ENCODE measurements at regions of chr9 and their contacts with region 1.

Region 1: DNA sequence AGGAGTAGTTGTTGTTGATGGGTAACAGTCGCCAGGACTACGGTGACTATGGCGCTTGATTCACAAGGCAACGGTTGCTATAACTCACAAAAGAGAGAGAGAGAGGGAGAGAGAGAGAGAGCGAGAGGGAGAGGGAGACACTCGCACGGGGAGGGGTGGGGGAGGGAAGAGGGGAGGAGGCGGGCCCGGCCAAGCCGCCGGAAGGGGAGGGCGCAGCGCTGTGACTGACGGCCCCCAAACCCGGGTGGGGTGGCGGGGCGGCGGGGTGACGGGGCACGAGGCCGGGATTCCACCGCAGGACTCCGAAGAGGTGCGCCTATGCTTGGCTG is at the start of gene RFX3:
- DNase-seq: peak; percentile 96
- ATAC-seq: peak; percentile 63
- H3K4me3 Mint-ChIP-seq: peak within 1 kb of the TSS; percentile 89
- H3K27ac Mint-ChIP-seq: peak within 1 kb of the TSS; percentile 99
- H3K4me1 Mint-ChIP-seq: peaks cover 39% of the 10 kb centered on the region
- H3K27me3 Mint-ChIP-seq: no peaks in the 10 kb centered on the region
- total RNA-seq, gene RFX3: 12.5 to 16.6 TPM

Region 2: GRCh38 chr9:2837915-2838314 is 687.9 kb before region 1 on chr9:
- CTCF ChIA-PET with region 1: interaction called, 3 read pairs
- POLR2A ChIA-PET with region 1: no interaction called
- intact Hi-C with region 1: loop called in 1 of 2 experiments (anchors 5 kb)
- DNase-seq: no peak
- ATAC-seq: no peak
- H3K4me3 Mint-ChIP-seq: no peak overlapping the region
- H3K27ac Mint-ChIP-seq: peak overlapping the region; percentile 77
- H3K4me1 Mint-ChIP-seq: peaks cover 15% of the 10 kb centered on the region
- H3K27me3 Mint-ChIP-seq: no peaks in the 10 kb centered on the region

Region 3: GRCh38 chr9:3299872-3300271 is 225.9 kb before region 1 on chr9:
- CTCF ChIA-PET with region 1: no interaction called
- POLR2A ChIA-PET with region 1: no interaction called
- intact Hi-C with region 1: no loop called
- DNase-seq: no peak
- ATAC-seq: no peak
- H3K4me3 Mint-ChIP-seq: no peak overlapping the region
- H3K27ac Mint-ChIP-seq: no peak overlapping the region
- H3K4me1 Mint-ChIP-seq: peaks cover 10% of the 10 kb centered on the region
- H3K27me3 Mint-ChIP-seq: no peaks in the 10 kb centered on the region

Region 4: DNA sequence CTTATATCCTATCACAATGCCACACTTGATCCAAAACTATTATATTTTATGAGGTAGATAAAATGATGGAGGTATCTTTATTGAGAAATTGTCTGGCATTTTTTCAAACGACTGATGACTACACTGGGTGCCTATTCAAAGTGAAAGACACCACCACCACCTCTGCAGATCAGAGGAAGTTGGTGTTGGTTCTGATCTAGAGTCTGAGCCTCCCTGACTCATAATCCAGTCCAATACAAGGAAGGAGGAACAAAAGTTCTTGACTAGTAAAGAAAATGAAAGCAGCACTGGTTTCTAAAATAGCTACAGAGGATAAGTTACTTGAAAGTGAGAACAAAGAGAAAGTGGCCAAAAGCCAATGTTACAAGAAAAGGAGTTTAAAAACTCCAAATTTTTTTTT is 139.9 kb before region 1 on chr9:
- CTCF ChIA-PET with region 1: no interaction called
- POLR2A ChIA-PET with region 1: interaction called, 4 read pairs
- intact Hi-C with region 1: loop called (anchors 2 to 5 kb)
- DNase-seq: peak; percentile 65
- ATAC-seq: peak; percentile 100
- H3K4me3 Mint-ChIP-seq: no peak overlapping the region
- H3K27ac Mint-ChIP-seq: no peak overlapping the region
- H3K4me1 Mint-ChIP-seq: peaks cover 36% of the 10 kb centered on the region
- H3K27me3 Mint-ChIP-seq: no peaks in the 10 kb centered on the region

Region 5: GRCh38 chr9:3498691-3499090 is 27.1 kb before region 1 on chr9:
- CTCF ChIA-PET with region 1: no interaction called
- POLR2A ChIA-PET with region 1: no interaction called
- intact Hi-C with region 1: no loop called
- DNase-seq: no peak
- ATAC-seq: no peak
- H3K4me3 Mint-ChIP-seq: no peak overlapping the region
- H3K27ac Mint-ChIP-seq: no peak overlapping the region
- H3K4me1 Mint-ChIP-seq: peaks cover 31% of the 10 kb centered on the region
- H3K27me3 Mint-ChIP-seq: no peaks in the 10 kb centered on the region

Region 6: GRCh38 chr9:3508521-3509291 is 17.1 kb before region 1 on chr9:
- CTCF ChIA-PET with region 1: interaction called, 5 read pairs
- POLR2A ChIA-PET with region 1: interaction called, 6 read pairs
- intact Hi-C with region 1: loop called (anchors 1 kb)
- DNase-seq: no peak
- ATAC-seq: peak; percentile 48
- H3K4me3 Mint-ChIP-seq: peak overlapping the region; percentile 41
- H3K27ac Mint-ChIP-seq: peak overlapping the region; percentile 86
- H3K4me1 Mint-ChIP-seq: peaks cover 51% of the 10 kb centered on the region
- H3K27me3 Mint-ChIP-seq: no peaks in the 10 kb centered on the region

Region 7: GRCh38 chr9:4297151-4297785 is 771.5 kb after region 1 on chr9:
- CTCF ChIA-PET with region 1: no interaction called
- POLR2A ChIA-PET with region 1: no interaction called
- intact Hi-C with region 1: loop called (anchors 2 to 5 kb)
- DNase-seq: peak; percentile 65
- ATAC-seq: peak; percentile 37
- H3K4me3 Mint-ChIP-seq: peak overlapping the region; percentile 86
- H3K27ac Mint-ChIP-seq: peak overlapping the region; percentile 86
- H3K4me1 Mint-ChIP-seq: peaks cover 45% of the 10 kb centered on the region
- H3K27me3 Mint-ChIP-seq: peaks cover 32% of the 10 kb centered on the region

Region 8: GRCh38 chr9:4939118-4939561 is 1413.3 kb after region 1 on chr9:
- CTCF ChIA-PET with region 1: no interaction called
- POLR2A ChIA-PET with region 1: no interaction called
- intact Hi-C with region 1: loop called in 1 of 2 experiments (anchors 5 kb)
- DNase-seq: no peak
- ATAC-seq: peak; percentile 34
- H3K4me3 Mint-ChIP-seq: no peak overlapping the region
- H3K27ac Mint-ChIP-seq: peak overlapping the region; percentile 72
- H3K4me1 Mint-ChIP-seq: peaks cover 74% of the 10 kb centered on the region
- H3K27me3 Mint-ChIP-seq: no peaks in the 10 kb centered on the region

Region 9: GRCh38 chr9:5450359-5451091 is 1924.7 kb after region 1 on chr9 and contains the start of gene CD274:
- CTCF ChIA-PET with region 1: no interaction called
- POLR2A ChIA-PET with region 1: no interaction called
- intact Hi-C with region 1: loop called in 1 of 2 experiments (anchors 5 kb)
- DNase-seq: peak; percentile 94
- ATAC-seq: peak; percentile 66
- H3K4me3 Mint-ChIP-seq: peak within 1 kb of the TSS; percentile 98
- H3K27ac Mint-ChIP-seq: peak within 1 kb of the TSS; percentile 90
- H3K4me1 Mint-ChIP-seq: peaks cover 77% of the 10 kb centered on the region
- H3K27me3 Mint-ChIP-seq: no peaks in the 10 kb centered on the region
- total RNA-seq, gene CD274: 25.0 to 30.1 TPM